Calu3 (cell line): ENCODE measurements at regions of chr16 and their contacts with region 1.

Region 1: DNA sequence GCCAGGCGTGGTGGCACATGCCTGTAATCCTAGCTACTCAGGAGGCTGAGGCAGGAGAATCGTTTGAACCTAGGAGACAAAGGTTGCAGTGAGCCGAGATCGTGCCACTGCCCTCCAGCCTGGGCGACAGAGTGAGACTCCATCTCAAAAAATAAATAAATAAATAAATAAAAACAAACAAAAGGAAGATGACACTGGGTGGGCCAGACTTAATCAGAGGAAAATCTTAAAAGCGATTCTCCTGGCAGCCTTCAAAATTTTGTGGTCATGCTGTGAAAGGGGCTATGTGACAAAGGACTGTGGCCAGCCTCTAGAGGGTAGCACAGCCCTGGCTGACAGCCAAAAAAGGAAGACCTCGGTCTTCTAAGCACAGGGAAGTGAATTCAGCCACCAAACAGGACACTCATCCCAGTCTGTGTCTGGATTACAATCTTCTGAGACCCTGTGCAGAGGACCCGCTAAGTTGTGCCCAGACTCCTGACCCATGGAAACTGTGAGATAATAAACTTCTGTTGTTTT is 391.1 kb downstream of the CNTNAP4 start:
- DNase-seq: peak; percentile 53
- H3K4me3 Mint-ChIP-seq: no peak overlapping the region
- H3K27ac Mint-ChIP-seq: no peak overlapping the region
- H3K4me1 Mint-ChIP-seq: peaks cover 32% of the 10 kb centered on the region
- H3K27me3 Mint-ChIP-seq: no peaks in the 10 kb centered on the region
- CTCF ChIP-seq: no peak

Region 2: GRCh38 chr16:76748461-76749348 is 80.4 kb after region 1 on chr16:
- CTCF ChIA-PET with region 1: no interaction called
- intact Hi-C with region 1: no loop called
- DNase-seq: no peak
- H3K4me3 Mint-ChIP-seq: no peak overlapping the region
- H3K27ac Mint-ChIP-seq: no peak overlapping the region
- H3K4me1 Mint-ChIP-seq: no peaks in the 10 kb centered on the region
- H3K27me3 Mint-ChIP-seq: no peaks in the 10 kb centered on the region
- CTCF ChIP-seq: no peak

Region 3: GRCh38 chr16:76882077-76882476 is 213.8 kb after region 1 on chr16:
- CTCF ChIA-PET with region 1: no interaction called
- intact Hi-C with region 1: loop called (anchors 2 kb)
- DNase-seq: no peak
- H3K4me3 Mint-ChIP-seq: no peak overlapping the region
- H3K27ac Mint-ChIP-seq: no peak overlapping the region
- H3K4me1 Mint-ChIP-seq: no peaks in the 10 kb centered on the region
- H3K27me3 Mint-ChIP-seq: no peaks in the 10 kb centered on the region
- CTCF ChIP-seq: no peak